AG04449 (cell line): ENCODE measurements at regions of chr3 and their contacts with region 1.

Region 1: GRCh38 chr3:101229681-101230080 is 90.7 kb downstream of the IMPG2 start:
- DNase-seq: no peak
- H3K4me3 ChIP-seq: no peak overlapping the region
- CTCF ChIP-seq: peak; percentile 13

Region 2: DNA sequence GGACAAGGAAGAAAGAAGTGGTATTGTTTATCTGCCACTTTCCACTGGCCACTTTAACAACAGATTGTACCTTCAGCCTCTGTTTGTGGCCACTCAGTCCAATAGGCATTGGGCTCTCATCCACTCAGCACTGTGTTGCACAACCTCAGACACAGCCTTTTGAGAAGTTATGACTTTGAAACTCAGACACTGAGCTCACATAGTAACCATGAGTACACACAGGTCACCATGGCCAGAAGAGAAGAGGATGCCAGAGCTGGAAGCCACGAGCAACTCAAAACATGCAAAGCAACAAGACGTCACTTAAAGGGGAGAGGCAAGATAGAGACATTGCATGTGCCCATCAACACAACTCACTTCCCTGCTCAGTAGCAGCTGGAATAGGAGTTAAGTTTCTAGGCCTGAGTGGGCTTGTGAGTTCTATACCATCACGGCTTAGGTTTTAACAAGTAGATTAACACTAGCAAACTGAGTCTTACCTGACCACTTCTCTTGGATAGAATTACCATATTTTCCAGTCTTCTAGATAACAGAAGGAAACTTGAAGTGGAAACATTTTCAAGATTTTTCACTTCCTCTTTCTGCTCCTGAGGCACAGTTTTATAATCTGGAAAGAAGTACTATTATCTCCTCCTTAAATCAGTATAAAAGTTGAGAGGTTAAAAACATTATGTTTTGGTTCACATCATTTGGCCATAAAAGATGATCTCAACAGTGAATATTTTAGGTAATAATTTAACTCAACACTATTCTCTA is 12.8 kb before region 1 on chr3:
- CTCF ChIA-PET with region 1: interaction called, 10 read pairs
- POLR2A ChIA-PET with region 1: no interaction called
- DNase-seq: peak; percentile 26
- H3K4me3 ChIP-seq: no peak overlapping the region
- CTCF ChIP-seq: no peak

Region 3: GRCh38 chr3:101325393-101326134 is 95.9 kb after region 1 on chr3:
- CTCF ChIA-PET with region 1: no interaction called
- POLR2A ChIA-PET with region 1: no interaction called
- DNase-seq: no peak
- H3K4me3 ChIP-seq: no peak overlapping the region
- CTCF ChIP-seq: no peak

Region 4: GRCh38 chr3:101381809-101382208 is 152.1 kb after region 1 on chr3:
- CTCF ChIA-PET with region 1: interaction called, 11 read pairs
- POLR2A ChIA-PET with region 1: no interaction called
- DNase-seq: no peak
- H3K4me3 ChIP-seq: no peak overlapping the region
- CTCF ChIP-seq: no peak